ENCODE measurements at regions of chr18 and their contacts with region 1.

Region 1: DNA sequence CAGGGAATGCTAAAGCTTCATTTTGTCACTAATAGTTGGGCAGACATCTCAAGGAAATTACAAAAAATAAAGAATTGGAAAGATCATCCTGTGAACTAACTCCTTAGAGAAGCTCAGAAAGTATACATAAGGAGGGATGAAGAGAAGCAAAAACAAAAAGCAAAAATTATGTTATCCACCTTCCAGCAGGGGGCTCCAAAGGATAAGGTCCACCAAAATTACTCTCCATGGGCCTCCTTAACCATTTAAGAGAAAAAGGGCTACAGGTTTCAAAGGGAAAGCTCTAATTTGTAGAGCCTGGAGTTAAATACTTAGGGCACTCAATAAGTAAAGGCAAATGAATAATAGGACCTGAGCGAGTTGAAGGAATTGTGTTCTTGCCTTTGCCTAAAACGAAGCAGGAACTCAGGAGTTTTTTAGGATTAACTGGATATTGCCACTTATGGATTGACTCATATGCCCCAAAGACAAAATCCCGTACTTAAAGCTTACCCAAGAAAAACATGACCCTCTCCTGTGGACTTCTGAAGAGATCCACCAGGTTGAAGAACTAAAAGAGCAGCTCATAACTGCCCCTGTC is 1167.9 kb downstream of the DSC3 start:
- DNase-seq: peak; percentile 58
- H3K4me3 Mint-ChIP-seq: no peak overlapping the region
- H3K27ac Mint-ChIP-seq: no peak overlapping the region
- H3K4me1 Mint-ChIP-seq: no peaks in the 10 kb centered on the region
- H3K27me3 Mint-ChIP-seq: no peaks in the 10 kb centered on the region
- CTCF ChIP-seq: peak; percentile 62

Region 2: DNA sequence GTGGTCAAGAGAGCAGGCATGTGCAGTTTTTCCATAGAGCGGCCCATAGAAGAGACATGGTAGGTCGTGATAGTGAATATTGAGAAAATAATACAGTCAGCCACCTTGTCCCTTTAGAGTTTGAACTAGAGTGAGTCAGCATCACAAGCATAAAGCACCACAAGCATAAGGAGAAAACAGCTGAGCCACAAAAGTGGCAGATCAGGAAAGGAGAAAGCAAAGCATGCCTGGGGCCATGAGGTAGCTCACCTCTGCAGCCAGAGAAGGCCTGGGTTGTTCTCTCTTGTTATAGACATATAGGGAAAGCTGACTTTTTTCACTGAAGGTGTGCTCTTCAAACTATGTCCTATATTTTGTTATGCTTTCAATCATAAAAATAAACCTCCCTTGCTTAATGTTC is 289.0 kb after region 1 on chr18:
- CTCF ChIA-PET with region 1: no interaction called
- intact Hi-C with region 1: no loop called
- DNase-seq: no peak
- H3K4me3 Mint-ChIP-seq: no peak overlapping the region
- H3K27ac Mint-ChIP-seq: no peak overlapping the region
- H3K4me1 Mint-ChIP-seq: peaks cover 7% of the 10 kb centered on the region
- H3K27me3 Mint-ChIP-seq: no peaks in the 10 kb centered on the region
- CTCF ChIP-seq: no peak

Region 3: GRCh38 chr18:30280880-30281470 is 406.4 kb after region 1 on chr18:
- CTCF ChIA-PET with region 1: interaction called, 11 read pairs
- intact Hi-C with region 1: loop called (anchors 2 kb)
- DNase-seq: peak; percentile 57
- H3K4me3 Mint-ChIP-seq: no peak overlapping the region
- H3K27ac Mint-ChIP-seq: no peak overlapping the region
- H3K4me1 Mint-ChIP-seq: no peaks in the 10 kb centered on the region
- H3K27me3 Mint-ChIP-seq: no peaks in the 10 kb centered on the region
- CTCF ChIP-seq: peak; percentile 53

Region 4: DNA sequence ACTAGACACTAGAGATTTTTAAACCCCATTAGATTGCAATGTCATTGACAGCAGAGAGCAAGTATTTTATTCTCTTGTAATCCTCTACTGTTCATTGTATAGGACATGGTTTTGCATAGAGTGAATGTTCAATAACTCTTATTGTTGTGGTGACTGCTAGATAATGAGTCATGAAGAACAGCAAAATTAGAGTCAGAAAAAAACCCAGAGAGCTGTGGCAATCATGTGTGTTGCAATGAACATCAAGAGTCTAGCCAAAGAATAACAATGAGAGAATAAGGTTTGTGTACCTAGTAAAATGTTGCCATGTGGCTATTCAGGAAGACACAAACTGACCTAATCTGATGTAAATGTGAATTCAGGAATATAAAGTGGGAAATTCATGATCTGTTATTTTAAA is 483.9 kb after region 1 on chr18:
- CTCF ChIA-PET with region 1: no interaction called
- intact Hi-C with region 1: no loop called
- DNase-seq: peak; percentile 32
- H3K4me3 Mint-ChIP-seq: no peak overlapping the region
- H3K27ac Mint-ChIP-seq: peak overlapping the region; percentile 82
- H3K4me1 Mint-ChIP-seq: peaks cover 17% of the 10 kb centered on the region
- H3K27me3 Mint-ChIP-seq: no peaks in the 10 kb centered on the region
- CTCF ChIP-seq: no peak

Region 5: GRCh38 chr18:30889519-30890301 is 1015.1 kb after region 1 on chr18:
- CTCF ChIA-PET with region 1: interaction called, 17 read pairs
- intact Hi-C with region 1: loop called (anchors 1 kb)
- DNase-seq: peak; percentile 23
- H3K4me3 Mint-ChIP-seq: no peak overlapping the region
- H3K27ac Mint-ChIP-seq: no peak overlapping the region
- H3K4me1 Mint-ChIP-seq: no peaks in the 10 kb centered on the region
- H3K27me3 Mint-ChIP-seq: no peaks in the 10 kb centered on the region
- CTCF ChIP-seq: peak; percentile 37

Region 6: DNA sequence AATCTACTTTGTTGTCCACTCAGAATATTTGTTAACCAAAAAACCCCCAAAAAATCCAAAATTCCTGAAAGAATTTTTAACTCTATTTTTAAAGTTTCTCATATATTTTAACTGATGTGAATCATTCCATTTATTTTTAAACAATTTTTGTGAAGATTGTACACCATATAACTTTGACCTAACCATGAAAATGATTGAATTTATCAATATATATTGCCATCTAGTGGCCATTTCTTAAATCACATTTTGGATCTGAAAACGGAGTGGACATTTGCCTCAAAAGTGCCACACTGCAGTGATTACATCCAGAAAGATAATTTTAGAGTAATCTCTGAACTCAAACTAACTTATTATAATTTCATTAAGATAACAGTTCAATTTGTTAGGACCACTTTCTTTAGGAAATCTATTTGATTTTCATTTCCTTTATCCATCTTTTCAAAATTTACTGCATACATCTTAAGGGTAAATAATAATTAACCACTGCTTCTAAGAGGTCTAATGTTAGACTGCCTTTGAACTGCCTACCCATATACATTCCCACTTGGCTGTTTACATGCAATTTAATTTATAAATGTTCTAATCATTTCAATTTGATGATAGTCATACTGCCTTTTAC is 1096.8 kb after region 1 on chr18:
- CTCF ChIA-PET with region 1: no interaction called
- intact Hi-C with region 1: loop called (anchors 10 kb)
- DNase-seq: no peak
- H3K4me3 Mint-ChIP-seq: no peak overlapping the region
- H3K27ac Mint-ChIP-seq: no peak overlapping the region
- H3K4me1 Mint-ChIP-seq: no peaks in the 10 kb centered on the region
- H3K27me3 Mint-ChIP-seq: no peaks in the 10 kb centered on the region
- CTCF ChIP-seq: peak; percentile 29